ENCODE measurements at regions of chr5 and their contacts with region 1.

Region 1: DNA sequence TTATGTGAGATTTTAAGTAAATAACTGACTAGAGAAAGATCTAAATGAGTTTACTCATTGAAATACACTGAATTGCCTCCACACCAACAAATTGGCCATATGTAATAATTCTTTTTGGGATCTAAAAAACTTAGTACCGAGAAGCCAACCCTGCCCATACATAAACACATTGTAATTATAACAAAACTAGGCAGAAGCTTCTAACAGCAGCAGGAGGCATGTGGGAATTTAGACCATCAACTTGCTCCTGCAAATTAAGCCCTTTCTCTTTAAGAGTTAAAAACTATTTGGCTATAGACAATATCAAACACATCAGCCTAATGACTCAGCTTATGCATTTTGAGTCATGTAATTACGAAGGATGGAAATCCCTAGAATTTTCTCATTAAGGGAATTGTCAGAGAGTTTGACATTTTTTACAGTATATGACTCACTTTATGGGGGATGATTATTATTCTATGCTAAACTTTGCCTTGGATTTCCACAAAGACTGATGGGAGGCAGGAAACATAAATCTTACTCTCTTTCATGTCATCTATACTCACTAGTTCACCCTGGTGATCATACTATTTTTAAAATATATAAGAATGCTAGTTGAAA is 1.0 kb downstream of the IL7R start:
- DNase-seq: peak in 2 of 14 experiments; percentile 49 to 53
- ATAC-seq: no peak
- H3K4me3 ChIP-seq: peak overlapping the region; percentile 88
- H3K4me3 Mint-ChIP-seq: peak overlapping the region; percentile 93
- H3K27ac ChIP-seq: peak overlapping the region; percentile 97 to 98
- H3K27ac Mint-ChIP-seq: peak overlapping the region; percentile 99
- H3K4me1 ChIP-seq: peaks cover 31% of the 10 kb centered on the region
- H3K4me1 Mint-ChIP-seq: peaks cover 73% of the 10 kb centered on the region
- H3K27me3 ChIP-seq: no peaks in the 10 kb centered on the region
- H3K27me3 Mint-ChIP-seq: no peaks in the 10 kb centered on the region
- CTCF ChIP-seq: no peak

Region 2: GRCh38 chr5:35651002-35651756 is 206.5 kb before region 1 on chr5:
- CTCF ChIA-PET with region 1: interaction called, 13 read pairs
- POLR2A ChIA-PET with region 1: interaction called, 14 read pairs
- intact Hi-C with region 1: loop called (anchors 2 to 5 kb)
- DNase-seq: peak; percentile 37 to 84 (median 58)
- ATAC-seq: peak; percentile 99
- H3K4me3 ChIP-seq: no peak overlapping the region
- H3K4me3 Mint-ChIP-seq: no peak overlapping the region
- H3K27ac ChIP-seq: no peak overlapping the region
- H3K27ac Mint-ChIP-seq: peak overlapping the region; percentile 23
- H3K4me1 ChIP-seq: peaks cover 5% of the 10 kb centered on the region
- H3K4me1 Mint-ChIP-seq: peaks cover 16% of the 10 kb centered on the region
- H3K27me3 ChIP-seq: no peaks in the 10 kb centered on the region
- H3K27me3 Mint-ChIP-seq: no peaks in the 10 kb centered on the region
- CTCF ChIP-seq: peak; percentile 84

Region 3: GRCh38 chr5:35656721-35657120 is 201.0 kb before region 1 on chr5:
- CTCF ChIA-PET with region 1: interaction called, 13 read pairs
- POLR2A ChIA-PET with region 1: interaction called, 64 read pairs
- intact Hi-C with region 1: loop called (anchors 2 to 5 kb)
- DNase-seq: no peak
- ATAC-seq: no peak
- H3K4me3 ChIP-seq: no peak overlapping the region
- H3K4me3 Mint-ChIP-seq: no peak overlapping the region
- H3K27ac ChIP-seq: no peak overlapping the region
- H3K27ac Mint-ChIP-seq: no peak overlapping the region
- H3K4me1 ChIP-seq: no peaks in the 10 kb centered on the region
- H3K4me1 Mint-ChIP-seq: peaks cover 31% of the 10 kb centered on the region
- H3K27me3 ChIP-seq: no peaks in the 10 kb centered on the region
- H3K27me3 Mint-ChIP-seq: no peaks in the 10 kb centered on the region
- CTCF ChIP-seq: no peak

Region 4: DNA sequence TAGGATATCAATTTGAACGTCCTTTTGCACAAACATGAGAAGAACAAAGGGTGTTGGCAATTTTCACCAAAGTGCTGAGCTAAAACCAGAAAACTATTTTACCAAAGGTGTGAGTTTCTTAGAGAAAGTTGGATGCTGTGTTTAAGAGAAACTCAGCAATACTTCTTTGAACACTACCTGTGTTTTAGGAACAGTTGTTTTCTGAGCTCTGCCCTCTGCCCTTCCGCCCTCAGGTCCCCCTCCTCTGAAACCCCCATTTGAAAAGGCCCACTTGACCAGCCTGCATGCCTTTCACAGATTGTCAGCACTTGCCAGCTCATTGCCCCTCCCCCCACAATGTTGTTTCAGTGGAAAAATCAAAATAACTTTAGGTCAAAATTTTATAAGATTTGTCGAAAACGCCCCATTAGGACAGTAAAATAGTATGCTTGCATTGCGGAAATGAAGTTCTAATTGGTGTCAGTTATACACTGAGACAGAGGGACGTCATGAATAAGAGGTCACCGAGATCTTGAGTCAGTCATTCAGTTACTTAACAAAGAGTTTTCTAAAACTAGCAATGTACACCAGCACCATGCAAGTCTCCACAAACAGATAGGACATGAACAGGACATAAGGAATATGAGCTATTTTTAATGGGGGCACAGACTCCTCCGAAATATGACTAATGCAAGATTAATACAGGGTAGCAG is 62.9 kb before region 1 on chr5:
- CTCF ChIA-PET with region 1: interaction called, 3 read pairs
- POLR2A ChIA-PET with region 1: interaction called, 42 read pairs
- intact Hi-C with region 1: no loop called
- DNase-seq: no peak
- ATAC-seq: no peak
- H3K4me3 ChIP-seq: no peak overlapping the region
- H3K4me3 Mint-ChIP-seq: peak overlapping the region; percentile 52
- H3K27ac ChIP-seq: peak overlapping the region in 1 of 2 donors; percentile 18
- H3K27ac Mint-ChIP-seq: peak overlapping the region; percentile 92
- H3K4me1 ChIP-seq: peaks cover 54% of the 10 kb centered on the region
- H3K4me1 Mint-ChIP-seq: peaks cover 91% of the 10 kb centered on the region
- H3K27me3 ChIP-seq: no peaks in the 10 kb centered on the region
- H3K27me3 Mint-ChIP-seq: no peaks in the 10 kb centered on the region
- CTCF ChIP-seq: no peak

Region 5: DNA sequence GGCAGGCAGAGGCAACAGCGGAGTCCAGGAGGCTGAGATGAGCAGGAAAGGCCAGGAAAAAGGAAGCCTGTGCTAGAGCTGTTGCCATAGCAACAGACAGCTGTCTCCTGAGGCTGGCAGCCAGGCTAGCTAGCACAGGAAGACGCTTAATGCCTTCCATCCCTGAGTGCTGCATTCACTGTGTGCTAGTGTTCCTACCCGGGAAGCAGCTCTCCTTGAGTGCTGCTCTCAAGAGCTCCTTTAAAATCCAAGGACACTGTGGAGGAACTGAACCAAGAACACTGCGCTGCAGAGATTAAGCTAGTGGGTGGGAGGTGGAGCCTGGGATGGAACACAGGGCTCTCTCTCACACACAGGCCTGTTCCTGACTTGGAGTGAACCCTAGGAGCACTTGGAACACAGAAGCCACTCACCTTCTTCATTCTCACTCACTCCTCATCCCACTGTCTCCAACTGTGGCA is 54.5 kb before region 1 on chr5:
- CTCF ChIA-PET with region 1: no interaction called
- POLR2A ChIA-PET with region 1: interaction called, 159 read pairs
- intact Hi-C with region 1: no loop called
- DNase-seq: peak in 5 of 14 experiments; percentile 22 to 72 (median 62)
- ATAC-seq: peak; percentile 51
- H3K4me3 ChIP-seq: no peak overlapping the region
- H3K4me3 Mint-ChIP-seq: peak overlapping the region; percentile 49
- H3K27ac ChIP-seq: peak overlapping the region in 1 of 2 donors; percentile 23
- H3K27ac Mint-ChIP-seq: peak overlapping the region; percentile 80
- H3K4me1 ChIP-seq: peaks cover 40% of the 10 kb centered on the region
- H3K4me1 Mint-ChIP-seq: peaks cover 85% of the 10 kb centered on the region
- H3K27me3 ChIP-seq: no peaks in the 10 kb centered on the region
- H3K27me3 Mint-ChIP-seq: no peaks in the 10 kb centered on the region
- CTCF ChIP-seq: no peak

Measured in CD4-positive, alpha-beta T cell (primary cell).